GM10248 (cell line): ENCODE measurements at regions of chr4 and their contacts with region 1.

Region 1: GRCh38 chr4:165131247-165131832 is 18.7 kb upstream of the TMEM192 start:
- DNase-seq: peak; percentile 55
- CTCF ChIP-seq: peak; percentile 88

Region 2: GRCh38 chr4:164876700-164877324 is 254.5 kb before region 1 on chr4 and contains the start of gene APELA:
- CTCF ChIA-PET with region 1: no interaction called
- POLR2A ChIA-PET with region 1: no interaction called
- DNase-seq: peak; percentile 35
- CTCF ChIP-seq: no peak

Region 3: DNA sequence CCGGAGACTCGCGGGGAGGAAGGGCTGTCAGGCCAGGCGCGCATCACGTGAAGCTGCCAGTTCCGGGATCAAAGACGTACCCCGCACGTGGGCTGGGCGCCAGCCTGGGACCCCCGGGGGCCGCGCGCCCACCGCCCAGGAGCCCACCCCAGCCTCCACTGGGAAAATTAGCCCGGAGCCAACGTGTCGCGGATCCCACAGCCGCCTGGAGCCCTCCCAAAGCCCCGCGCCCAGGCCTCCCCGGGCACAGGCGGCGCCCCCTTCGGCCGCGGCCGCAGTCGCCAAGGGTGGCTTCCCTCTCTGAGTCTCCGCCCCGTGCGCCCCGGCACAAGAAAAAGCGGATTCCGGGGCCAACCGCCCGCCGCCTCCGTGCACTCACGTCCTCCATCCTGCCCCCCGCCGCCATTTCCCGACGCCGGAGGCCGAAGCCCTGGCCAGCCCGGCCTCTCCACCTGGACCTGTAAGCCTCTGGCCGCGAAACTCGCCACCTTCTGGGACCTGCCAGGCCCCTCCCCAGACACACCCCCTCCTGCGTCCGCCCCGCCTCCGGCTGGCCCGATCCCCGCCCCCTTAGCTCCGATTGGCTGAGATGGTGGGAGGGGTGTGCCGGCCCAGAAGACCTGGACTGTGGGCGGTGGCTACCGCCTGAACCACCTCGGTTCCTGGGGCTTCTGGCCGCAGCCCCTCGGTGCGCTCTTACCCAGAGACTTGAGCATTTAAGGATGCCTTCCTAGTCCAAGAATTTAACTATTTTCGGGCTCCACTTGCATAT is 18.8 kb before region 1 on chr4 and contains the start of gene TMEM192:
- CTCF ChIA-PET with region 1: interaction called, 50 read pairs
- POLR2A ChIA-PET with region 1: no interaction called
- DNase-seq: peak; percentile 97
- CTCF ChIP-seq: peak; percentile 33

Region 4: DNA sequence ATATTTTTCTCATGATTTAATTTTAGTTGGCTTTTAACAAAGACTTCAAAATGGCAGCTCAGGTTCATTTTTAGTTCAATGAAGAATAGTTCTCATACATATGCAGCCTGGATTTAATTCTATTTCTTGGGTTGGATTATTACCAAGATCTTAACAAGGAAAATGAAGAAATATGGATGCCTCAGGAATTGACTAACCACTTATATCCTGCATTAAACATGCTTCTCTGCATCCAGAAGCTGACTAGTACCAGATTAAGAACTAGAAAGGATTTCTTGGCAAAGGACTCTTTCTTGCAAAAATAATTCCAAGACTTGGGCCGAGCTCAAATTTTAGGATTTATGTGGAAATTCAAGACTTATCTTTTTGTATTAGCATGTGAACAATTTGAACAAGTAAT is 70.5 kb after region 1 on chr4:
- CTCF ChIA-PET with region 1: interaction called, 15 read pairs
- POLR2A ChIA-PET with region 1: no interaction called
- DNase-seq: no peak
- CTCF ChIP-seq: no peak

Region 5: GRCh38 chr4:165343353-165344191 is 212.2 kb after region 1 on chr4:
- CTCF ChIA-PET with region 1: interaction called, 23 read pairs
- POLR2A ChIA-PET with region 1: no interaction called
- DNase-seq: no peak
- CTCF ChIP-seq: peak; percentile 19

Region 6: DNA sequence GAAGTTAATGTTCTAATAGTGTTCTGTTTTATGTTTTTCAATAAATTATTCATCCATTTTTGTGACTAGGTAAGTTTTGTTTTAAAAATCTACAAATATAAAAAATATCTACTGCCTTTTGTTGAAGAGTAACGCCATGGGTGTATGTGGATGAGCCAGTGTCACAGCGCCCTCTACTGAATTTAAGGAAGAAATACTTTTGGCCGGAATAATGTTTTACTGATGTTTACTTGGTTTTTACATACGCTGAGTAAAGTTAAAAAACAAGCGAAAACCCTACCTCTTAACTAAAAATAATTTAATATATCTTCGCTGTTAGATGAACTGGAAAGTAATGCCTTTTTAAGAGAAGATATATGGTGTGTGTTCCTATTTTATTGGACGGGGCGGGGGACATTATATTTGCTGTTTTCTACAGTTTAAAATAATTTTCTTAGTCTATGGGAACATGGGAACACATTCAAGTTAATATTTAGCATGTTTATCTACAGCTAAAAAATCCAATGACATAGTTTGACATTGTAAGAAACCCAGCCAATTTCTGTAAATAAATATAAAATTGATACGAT is 333.6 kb after region 1 on chr4:
- CTCF ChIA-PET with region 1: interaction called, 39 read pairs
- POLR2A ChIA-PET with region 1: no interaction called
- DNase-seq: peak; percentile 59
- CTCF ChIP-seq: peak; percentile 63

Region 7: GRCh38 chr4:165569031-165569430 is 437.7 kb after region 1 on chr4:
- CTCF ChIA-PET with region 1: no interaction called
- POLR2A ChIA-PET with region 1: no interaction called
- DNase-seq: no peak
- CTCF ChIP-seq: no peak